Activated CD4-positive, alpha-beta memory T cell treated with anti-CD3 and anti-CD28 coated beads for 36 hours (primary cell): ENCODE measurements at regions of chr12 and their contacts with region 1.

Region 1: GRCh38 chr12:3913278-3913677 is 40.1 kb upstream of the PARP11 start:
- DNase-seq: peak; percentile 52
- H3K4me3 Mint-ChIP-seq: no peak overlapping the region
- H3K27ac Mint-ChIP-seq: peak overlapping the region; percentile 63
- H3K4me1 Mint-ChIP-seq: peaks cover 18% of the 10 kb centered on the region
- H3K27me3 Mint-ChIP-seq: no peaks in the 10 kb centered on the region

Region 2: GRCh38 chr12:3803865-3804472 is 109.3 kb before region 1 on chr12:
- CTCF ChIA-PET with region 1: no interaction called
- POLR2A ChIA-PET with region 1: no interaction called
- intact Hi-C with region 1: no loop called
- DNase-seq: peak; percentile 81
- H3K4me3 Mint-ChIP-seq: no peak overlapping the region
- H3K27ac Mint-ChIP-seq: no peak overlapping the region
- H3K4me1 Mint-ChIP-seq: peaks cover 9% of the 10 kb centered on the region
- H3K27me3 Mint-ChIP-seq: no peaks in the 10 kb centered on the region

Region 3: GRCh38 chr12:3896801-3897331 is 16.4 kb before region 1 on chr12:
- CTCF ChIA-PET with region 1: no interaction called
- POLR2A ChIA-PET with region 1: no interaction called
- intact Hi-C with region 1: no loop called
- DNase-seq: no peak
- H3K4me3 Mint-ChIP-seq: peak overlapping the region; percentile 16
- H3K27ac Mint-ChIP-seq: peak overlapping the region; percentile 89
- H3K4me1 Mint-ChIP-seq: peaks cover 41% of the 10 kb centered on the region
- H3K27me3 Mint-ChIP-seq: no peaks in the 10 kb centered on the region

Region 4: GRCh38 chr12:3933074-3933818 is 20.0 kb after region 1 on chr12:
- CTCF ChIA-PET with region 1: no interaction called
- POLR2A ChIA-PET with region 1: no interaction called
- intact Hi-C with region 1: loop called (anchors 2 kb)
- DNase-seq: peak; percentile 40
- H3K4me3 Mint-ChIP-seq: peak overlapping the region; percentile 41
- H3K27ac Mint-ChIP-seq: peak overlapping the region; percentile 38
- H3K4me1 Mint-ChIP-seq: peaks cover 47% of the 10 kb centered on the region
- H3K27me3 Mint-ChIP-seq: no peaks in the 10 kb centered on the region

Region 5: GRCh38 chr12:4099276-4099675 is 186.0 kb after region 1 on chr12:
- CTCF ChIA-PET with region 1: no interaction called
- POLR2A ChIA-PET with region 1: no interaction called
- intact Hi-C with region 1: no loop called
- DNase-seq: no peak
- H3K4me3 Mint-ChIP-seq: no peak overlapping the region
- H3K27ac Mint-ChIP-seq: no peak overlapping the region
- H3K4me1 Mint-ChIP-seq: peaks cover 6% of the 10 kb centered on the region
- H3K27me3 Mint-ChIP-seq: no peaks in the 10 kb centered on the region